Activated CD4-positive, alpha-beta T cell treated with anti-CD3 and anti-CD28 coated beads, Interleukin-2, amount 10 ng/mL, durations not matched to agents 24 days and 14 days (primary cell): ENCODE measurements at regions of chr2 and their contacts with region 1.

Region 1: DNA sequence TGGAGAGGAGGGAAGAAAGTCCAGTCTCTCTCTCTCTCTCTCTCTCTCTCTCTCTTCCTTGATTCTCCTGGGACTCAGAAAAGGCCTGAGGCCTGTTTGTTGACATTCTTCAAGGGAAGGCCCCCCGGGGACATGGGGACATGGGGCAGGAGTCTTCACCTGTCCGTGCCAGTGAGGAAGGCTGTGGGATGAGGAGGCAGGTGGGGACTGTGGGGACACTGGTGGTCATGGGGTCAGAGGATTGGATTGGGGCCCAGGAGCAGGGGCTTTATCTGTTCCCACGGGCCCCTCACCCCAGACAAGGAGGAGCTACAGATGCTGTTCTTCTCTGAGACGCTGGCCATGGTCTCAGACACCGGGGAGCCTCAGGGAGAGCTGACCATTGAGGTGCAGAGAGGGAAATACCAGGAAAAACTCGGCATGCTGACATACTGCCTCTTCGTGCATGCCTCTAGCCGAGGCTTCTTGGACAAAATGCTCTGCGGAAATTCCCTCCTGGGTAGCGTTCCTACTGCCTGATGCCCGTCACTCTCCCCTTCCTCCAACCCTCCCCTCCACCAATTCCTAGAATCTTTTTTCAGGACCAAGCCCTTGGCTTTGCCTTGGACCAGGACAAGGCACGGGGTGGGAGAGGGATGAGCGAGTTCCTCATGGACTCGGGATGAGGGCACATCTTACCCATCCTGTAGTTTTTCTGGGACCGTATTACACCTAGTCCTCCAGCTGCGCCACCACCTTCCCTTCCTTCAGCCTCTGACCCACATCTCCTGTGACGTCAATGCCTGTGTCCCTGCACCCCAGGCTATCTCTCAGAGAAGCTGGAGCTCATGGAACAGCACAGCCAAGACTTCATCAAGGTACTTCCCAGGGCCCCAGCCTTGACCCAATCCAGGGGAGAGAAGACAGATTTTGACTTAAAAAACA is 841 bp downstream of the CATIP start:
- DNase-seq: no peak
- H3K4me3 Mint-ChIP-seq: no peak overlapping the region
- H3K27ac Mint-ChIP-seq: no peak overlapping the region
- H3K4me1 Mint-ChIP-seq: no peaks in the 10 kb centered on the region
- H3K27me3 Mint-ChIP-seq: peaks cover 2% of the 10 kb centered on the region

Region 2: GRCh38 chr2:218017211-218018053 is 340.1 kb before region 1 on chr2:
- intact Hi-C with region 1: no loop called
- DNase-seq: no peak
- H3K4me3 Mint-ChIP-seq: no peak overlapping the region
- H3K27ac Mint-ChIP-seq: no peak overlapping the region
- H3K4me1 Mint-ChIP-seq: no peaks in the 10 kb centered on the region
- H3K27me3 Mint-ChIP-seq: peaks cover 6% of the 10 kb centered on the region

Region 3: DNA sequence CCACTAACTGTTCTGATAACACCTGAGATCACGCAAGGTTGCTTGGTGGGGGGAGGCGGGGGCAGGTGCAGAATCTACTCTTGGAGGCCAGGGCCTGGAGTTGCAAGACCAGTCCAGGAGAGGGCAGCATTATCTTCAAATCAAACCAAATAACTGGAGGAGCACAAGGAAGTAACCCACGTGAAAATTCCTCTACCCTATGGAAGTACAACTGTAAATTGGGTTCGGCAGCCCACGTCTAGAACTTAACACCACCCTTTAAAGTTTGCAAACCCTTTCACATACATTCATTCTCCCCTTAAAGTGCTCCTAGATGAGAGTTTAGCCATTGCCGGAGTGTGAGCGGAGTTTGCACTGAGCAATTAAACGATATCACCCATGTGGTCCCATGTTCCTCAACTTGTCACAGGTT is 171.1 kb before region 1 on chr2:
- intact Hi-C with region 1: loop called (anchors 5 kb)
- DNase-seq: peak; percentile 90
- H3K4me3 Mint-ChIP-seq: no peak overlapping the region
- H3K27ac Mint-ChIP-seq: no peak overlapping the region
- H3K4me1 Mint-ChIP-seq: peaks cover 8% of the 10 kb centered on the region
- H3K27me3 Mint-ChIP-seq: peaks cover 13% of the 10 kb centered on the region

Region 4: GRCh38 chr2:218244665-218245064 is 112.8 kb before region 1 on chr2:
- intact Hi-C with region 1: no loop called
- DNase-seq: no peak
- H3K4me3 Mint-ChIP-seq: no peak overlapping the region
- H3K27ac Mint-ChIP-seq: peak overlapping the region; percentile 0
- H3K4me1 Mint-ChIP-seq: peaks cover 18% of the 10 kb centered on the region
- H3K27me3 Mint-ChIP-seq: no peaks in the 10 kb centered on the region